Activated naive CD4-positive, alpha-beta T cell treated with anti-CD3 and anti-CD28 coated beads for 36 hours (primary cell): ENCODE measurements at regions of chr12 and their contacts with region 1.

Region 1: DNA sequence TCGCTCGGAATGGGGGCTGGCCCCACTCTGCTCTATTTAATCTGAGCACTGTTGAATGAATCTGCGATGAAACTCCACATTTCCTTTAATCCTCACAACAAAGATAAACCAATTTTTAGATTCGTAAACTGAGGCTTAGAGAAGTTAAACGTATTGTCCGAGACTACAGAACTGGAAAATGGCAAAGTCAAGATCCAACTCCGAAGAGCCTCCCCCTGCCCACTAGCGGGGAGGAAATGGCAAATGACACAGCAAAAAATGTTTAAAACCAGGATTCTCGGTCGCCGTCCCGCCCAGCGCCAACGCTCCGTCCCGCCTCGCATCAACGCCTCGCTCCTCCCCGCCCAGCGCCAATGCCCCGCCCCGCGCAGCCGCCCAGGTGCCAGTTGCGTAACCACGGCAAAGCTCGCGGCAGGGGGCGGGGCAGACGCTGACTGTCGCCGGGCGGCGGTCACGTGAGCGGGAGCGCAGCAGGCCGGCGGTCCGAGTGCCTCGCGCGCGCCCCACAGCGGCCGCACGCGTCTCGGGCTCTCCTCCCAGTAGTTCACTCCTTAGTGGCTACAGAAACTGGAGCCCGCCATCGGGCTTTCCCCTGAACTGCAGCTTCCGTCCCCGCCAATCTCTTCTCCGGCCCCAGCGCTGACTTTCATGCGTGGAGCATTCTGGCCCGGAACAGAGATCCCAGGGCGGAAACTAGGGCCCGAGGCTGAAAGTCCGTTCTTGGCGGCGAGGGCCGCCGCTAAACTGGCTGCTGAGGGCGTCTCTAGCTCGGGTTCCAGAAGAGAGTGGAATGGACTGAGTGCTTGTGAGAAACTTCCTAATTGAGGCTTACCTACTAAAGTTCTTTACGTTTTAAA is 13.6 kb upstream of the LRRC23 start:
- DNase-seq: peak; percentile 100
- H3K4me3 Mint-ChIP-seq: peak overlapping the region; percentile 90
- H3K27ac Mint-ChIP-seq: peak overlapping the region; percentile 98
- H3K4me1 Mint-ChIP-seq: peaks cover 16% of the 10 kb centered on the region
- H3K27me3 Mint-ChIP-seq: no peaks in the 10 kb centered on the region

Region 2: DNA sequence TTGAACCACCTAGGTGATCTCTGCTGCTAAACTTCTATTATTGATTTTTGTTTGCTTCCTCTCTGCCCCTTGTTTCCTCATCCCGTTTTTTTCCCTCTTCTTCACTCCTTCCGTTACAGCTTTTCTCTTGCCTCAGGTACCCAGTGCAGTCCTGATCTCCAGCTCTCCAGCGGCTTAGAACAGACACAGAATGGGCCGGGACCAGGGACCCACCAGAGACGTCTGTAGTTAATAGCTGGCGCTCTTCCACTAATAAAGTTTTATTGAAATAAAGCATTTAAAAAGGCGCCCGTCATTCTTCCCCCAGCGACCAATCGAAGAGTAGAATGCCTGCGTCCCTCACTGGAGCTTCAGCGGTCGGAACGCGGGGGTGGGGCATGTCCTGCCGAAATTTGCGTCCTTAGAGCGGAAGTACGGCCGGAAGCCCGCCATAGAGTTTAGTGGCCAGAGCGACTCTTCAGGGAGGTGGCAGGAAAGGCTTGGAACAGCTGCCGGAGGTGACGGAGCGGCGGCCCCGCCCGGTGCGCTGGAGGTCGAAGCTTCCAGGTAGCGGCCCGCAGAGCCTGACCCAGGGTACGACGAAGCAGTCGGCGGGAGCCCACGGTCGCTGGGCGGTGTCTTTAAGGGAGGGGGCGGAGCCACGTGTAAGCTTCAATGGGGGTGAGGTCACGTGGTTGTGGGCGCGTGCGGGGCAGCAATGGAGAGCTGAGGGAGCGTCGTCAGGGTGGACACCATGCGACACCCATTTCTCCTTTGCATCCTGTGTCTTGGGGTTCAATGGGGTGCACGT is 167.2 kb before region 1 on chr12 and contains the start of gene COPS7A:
- CTCF ChIA-PET with region 1: no interaction called
- intact Hi-C with region 1: loop called (anchors 1 kb)
- DNase-seq: peak; percentile 98
- H3K4me3 Mint-ChIP-seq: peak within 1 kb of the TSS; percentile 91
- H3K27ac Mint-ChIP-seq: peak within 1 kb of the TSS; percentile 89
- H3K4me1 Mint-ChIP-seq: peaks cover 25% of the 10 kb centered on the region
- H3K27me3 Mint-ChIP-seq: no peaks in the 10 kb centered on the region
- total RNA-seq, gene COPS7A: 43.0 to 47.8 TPM

Region 3: GRCh38 chr12:6845395-6845794 is 45.6 kb before region 1 on chr12:
- CTCF ChIA-PET with region 1: no interaction called
- intact Hi-C with region 1: no loop called
- DNase-seq: no peak
- H3K4me3 Mint-ChIP-seq: no peak overlapping the region
- H3K27ac Mint-ChIP-seq: no peak overlapping the region
- H3K4me1 Mint-ChIP-seq: peaks cover 13% of the 10 kb centered on the region
- H3K27me3 Mint-ChIP-seq: no peaks in the 10 kb centered on the region

Region 4: DNA sequence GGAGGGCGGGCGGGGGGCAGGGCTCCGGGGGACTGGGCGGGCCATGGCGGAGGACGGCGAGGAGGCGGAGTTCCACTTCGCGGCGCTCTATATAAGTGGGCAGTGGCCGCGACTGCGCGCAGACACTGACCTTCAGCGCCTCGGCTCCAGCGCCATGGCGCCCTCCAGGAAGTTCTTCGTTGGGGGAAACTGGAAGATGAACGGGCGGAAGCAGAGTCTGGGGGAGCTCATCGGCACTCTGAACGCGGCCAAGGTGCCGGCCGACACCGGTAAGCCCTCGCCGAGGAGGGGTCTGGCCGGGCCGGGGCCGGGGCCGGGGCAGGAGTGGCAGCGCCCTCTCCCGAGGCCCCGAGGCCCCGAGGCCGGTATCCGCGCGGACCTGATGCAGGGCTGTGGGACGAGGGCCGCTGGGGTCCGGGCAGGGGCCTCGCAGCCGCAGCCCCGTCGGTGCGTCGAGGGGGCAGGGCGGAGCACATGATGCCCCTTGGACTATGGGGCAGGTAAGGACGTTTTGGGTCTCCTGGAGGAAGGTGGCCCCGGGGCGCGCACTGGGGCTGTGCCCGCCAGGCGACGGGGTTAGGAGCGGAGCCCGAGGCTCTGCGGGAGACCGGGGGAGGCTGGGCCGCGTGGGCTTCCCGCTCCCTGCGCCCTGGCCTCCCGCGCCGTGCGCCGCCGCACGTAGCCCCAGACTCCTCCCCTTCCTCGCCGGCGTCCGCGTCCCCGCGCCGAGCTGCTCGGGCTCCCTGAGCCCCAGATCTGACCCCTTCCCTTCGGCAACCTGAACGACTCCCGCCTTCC is 23.4 kb before region 1 on chr12 and contains the start of gene TPI1:
- CTCF ChIA-PET with region 1: interaction called, 33 read pairs
- intact Hi-C with region 1: loop called (anchors 1 kb)
- DNase-seq: peak; percentile 79
- H3K4me3 Mint-ChIP-seq: peak within 1 kb of the TSS; percentile 98
- H3K27ac Mint-ChIP-seq: peak within 1 kb of the TSS; percentile 94
- H3K4me1 Mint-ChIP-seq: peaks cover 52% of the 10 kb centered on the region
- H3K27me3 Mint-ChIP-seq: no peaks in the 10 kb centered on the region
- total RNA-seq, gene TPI1: 1,222 to 1,282 TPM

Region 5: DNA sequence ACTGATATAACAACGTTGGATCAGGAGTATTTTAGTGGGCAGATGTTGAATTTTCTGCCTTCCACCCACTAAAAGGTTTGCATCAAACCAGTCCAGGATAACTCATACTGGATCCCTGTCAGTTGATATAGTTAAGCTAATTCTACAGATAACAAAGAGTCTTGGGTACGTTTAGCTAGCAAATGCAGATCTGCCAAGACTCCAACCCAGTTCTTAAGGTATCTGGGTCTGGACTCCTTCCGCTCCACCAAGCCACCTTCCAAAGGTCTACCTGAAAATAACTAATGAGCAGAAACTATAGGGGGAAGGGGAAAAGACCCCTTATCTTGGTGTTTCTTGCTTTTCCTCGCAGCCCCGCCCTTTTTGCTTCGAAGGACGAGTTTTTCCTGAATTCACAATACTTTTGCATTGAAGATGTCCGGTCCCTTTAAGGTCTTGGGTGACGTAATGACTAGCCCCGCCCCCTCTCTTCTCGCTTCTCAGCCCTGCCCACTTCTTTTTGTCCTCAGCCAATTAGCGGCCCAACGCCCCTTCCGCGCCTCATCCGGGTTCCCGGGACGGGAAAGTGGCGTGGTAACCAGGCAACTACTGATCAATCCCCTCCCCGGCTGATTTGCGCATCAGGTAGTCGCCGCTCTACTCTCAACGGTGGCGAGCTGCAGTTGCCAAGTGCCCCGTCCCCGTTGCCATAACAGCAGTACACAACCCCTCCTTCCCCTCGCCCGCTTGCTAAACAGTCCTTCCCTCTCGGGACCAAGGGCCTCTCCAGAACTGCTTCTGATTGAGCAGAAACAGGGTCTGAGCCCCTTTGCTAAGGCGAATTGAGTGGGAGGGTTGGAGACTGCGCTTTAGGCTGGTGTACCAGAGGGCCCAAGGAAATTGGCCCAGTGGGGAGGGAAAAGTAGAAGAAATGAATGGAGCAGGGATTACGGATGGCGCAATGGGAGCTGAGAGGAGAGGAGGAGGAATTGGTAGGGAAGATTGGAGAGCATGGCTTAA is 13.6 kb after region 1 on chr12 and contains the start of gene LRRC23:
- CTCF ChIA-PET with region 1: interaction called, 7 read pairs
- intact Hi-C with region 1: loop called (anchors 1 kb)
- DNase-seq: peak; percentile 99
- H3K4me3 Mint-ChIP-seq: no peak within 1 kb of the TSS
- H3K27ac Mint-ChIP-seq: no peak within 1 kb of the TSS
- H3K4me1 Mint-ChIP-seq: peaks cover 3% of the 10 kb centered on the region
- H3K27me3 Mint-ChIP-seq: no peaks in the 10 kb centered on the region
- total RNA-seq, gene LRRC23: 6.3 to 6.4 TPM

Region 6: GRCh38 chr12:6914246-6914946 is 23.4 kb after region 1 on chr12 and contains the start of gene ENO2:
- CTCF ChIA-PET with region 1: interaction called, 8 read pairs
- intact Hi-C with region 1: loop called (anchors 1 kb)
- DNase-seq: peak; percentile 86
- H3K4me3 Mint-ChIP-seq: peak within 1 kb of the TSS; percentile 89
- H3K27ac Mint-ChIP-seq: peak within 1 kb of the TSS; percentile 71
- H3K4me1 Mint-ChIP-seq: peaks cover 35% of the 10 kb centered on the region
- H3K27me3 Mint-ChIP-seq: no peaks in the 10 kb centered on the region
- total RNA-seq, gene ENO2: 128 to 131 TPM

Region 7: GRCh38 chr12:6944381-6945186 is 53.6 kb after region 1 on chr12:
- CTCF ChIA-PET with region 1: no interaction called
- intact Hi-C with region 1: loop called (anchors 1 kb)
- DNase-seq: peak; percentile 96
- H3K4me3 Mint-ChIP-seq: peak overlapping the region; percentile 94
- H3K27ac Mint-ChIP-seq: peak overlapping the region; percentile 93
- H3K4me1 Mint-ChIP-seq: peaks cover 49% of the 10 kb centered on the region
- H3K27me3 Mint-ChIP-seq: no peaks in the 10 kb centered on the region

Region 8: GRCh38 chr12:6965026-6965661 is 74.1 kb after region 1 on chr12:
- CTCF ChIA-PET with region 1: interaction called, 4 read pairs
- intact Hi-C with region 1: loop called (anchors 1 kb)
- DNase-seq: peak; percentile 95
- H3K4me3 Mint-ChIP-seq: no peak overlapping the region
- H3K27ac Mint-ChIP-seq: peak overlapping the region; percentile 93
- H3K4me1 Mint-ChIP-seq: peaks cover 81% of the 10 kb centered on the region
- H3K27me3 Mint-ChIP-seq: no peaks in the 10 kb centered on the region